HEK293T (cell line): ENCODE measurements at regions of chr6 and their contacts with region 1.

Region 1: DNA sequence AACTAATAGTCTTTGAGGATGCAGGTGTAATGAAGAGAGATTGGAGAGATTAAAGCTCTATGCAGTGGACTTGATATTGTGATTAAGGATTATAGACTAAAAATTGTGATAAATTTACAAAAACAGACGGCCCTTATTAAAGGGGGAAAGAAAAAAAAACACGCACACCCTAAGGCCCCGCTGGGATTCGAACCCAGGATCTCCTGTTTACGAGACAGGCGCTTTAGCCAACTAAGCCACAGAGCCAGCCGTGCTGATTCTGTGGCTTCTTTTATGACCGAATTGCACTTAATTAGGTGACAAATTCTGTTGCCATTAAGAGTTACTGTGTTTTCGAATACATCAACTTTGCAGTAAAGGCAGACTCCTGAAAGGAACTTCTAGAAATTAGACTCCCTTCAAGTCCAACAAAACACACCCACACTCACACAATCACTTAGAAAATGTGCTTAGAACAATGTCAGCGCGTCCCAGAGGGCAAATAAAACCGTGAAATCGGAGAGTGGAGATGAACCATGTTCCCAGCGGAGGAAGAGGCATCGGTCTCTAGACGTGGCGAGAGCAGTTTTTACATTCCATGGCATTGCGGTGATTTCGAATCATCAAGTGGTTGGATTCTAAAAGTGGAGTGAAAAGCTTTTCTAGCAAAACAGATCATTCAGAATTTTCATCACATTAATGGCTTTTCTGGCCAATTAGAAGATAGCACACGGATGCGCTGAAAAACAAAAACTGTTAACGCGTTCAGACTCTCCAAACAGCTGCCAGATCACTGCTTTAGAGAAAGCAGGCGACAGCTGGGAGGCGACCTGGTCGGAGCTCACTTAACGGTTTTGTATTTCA is 122.6 kb downstream of the GPX5 start:
- DNase-seq: peak; percentile 66

Region 2: GRCh38 chr6:28634761-28635546 is 13.3 kb before region 1 on chr6:
- CTCF ChIA-PET with region 1: no interaction called
- POLR2A ChIA-PET with region 1: interaction called, 16 read pairs
- DNase-seq: peak; percentile 61